ENCODE measurements at regions of chr6 and their contacts with region 1.

Region 1: DNA sequence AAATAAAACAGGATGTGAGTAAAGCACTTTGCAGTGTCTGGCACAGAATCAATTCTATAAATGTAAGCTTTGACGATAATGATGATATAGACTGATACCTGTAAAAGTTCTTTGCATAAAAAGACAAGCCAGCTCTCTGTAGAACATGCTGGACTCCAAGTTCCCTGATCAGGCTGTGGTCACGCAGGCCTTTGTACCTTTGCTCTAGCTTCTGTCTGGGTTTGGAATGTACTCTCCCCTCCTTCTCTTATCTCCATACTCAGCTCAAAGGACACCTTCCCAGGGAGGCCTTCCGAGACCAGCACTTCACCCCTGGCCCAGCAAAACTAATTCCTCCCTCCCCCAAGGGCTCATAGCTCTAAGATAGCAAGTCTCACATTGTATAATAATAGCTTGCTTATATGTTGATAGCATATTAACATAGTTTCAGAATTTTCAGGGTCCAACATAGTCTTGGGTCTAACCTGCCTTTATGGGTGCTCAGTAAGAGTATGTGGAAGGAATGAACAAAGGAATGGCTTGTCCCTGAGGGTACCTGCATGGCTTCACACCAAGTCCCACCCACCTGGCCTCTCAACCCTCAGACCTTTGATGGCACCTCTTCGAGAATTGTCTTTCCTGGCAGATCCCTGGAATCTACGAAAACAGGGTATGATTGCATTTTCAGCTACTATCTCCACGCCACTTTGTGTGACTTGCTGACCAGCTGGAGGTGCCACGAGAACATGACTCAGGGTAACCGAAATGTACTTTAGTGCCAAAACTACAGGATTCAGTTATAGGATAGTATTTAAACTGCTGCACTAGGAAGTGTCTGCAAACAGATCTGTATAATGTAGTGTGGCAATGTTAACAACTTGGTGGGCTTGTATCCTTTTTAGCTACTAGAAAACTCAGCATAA is 41.7 kb upstream of the PIM1 start:
- DNase-seq: peak in 2 of 7 donors; percentile 46 to 54
- H3K4me3 ChIP-seq: no peak overlapping the region
- H3K27ac ChIP-seq: peak overlapping the region in 1 of 5 donors; percentile 51
- H3K4me1 ChIP-seq: peaks cover 0 to 26% of the 10 kb centered on the region in 2 donors
- H3K27me3 ChIP-seq: no peaks in the 10 kb centered on the region
- CTCF ChIP-seq: no peak
- POLR2A ChIP-seq: no peak

Region 2: GRCh38 chr6:36666726-36667591 is 461.3 kb before region 1 on chr6:
- intact Hi-C with region 1: no loop called
- DNase-seq: peak; percentile 86 to 96 (median 96)
- H3K4me3 ChIP-seq: no peak overlapping the region
- H3K27ac ChIP-seq: peak overlapping the region in 4 of 5 donors; percentile 10 to 80 (median 56)
- H3K4me1 ChIP-seq: peaks cover 13 to 14% of the 10 kb centered on the region in 2 donors
- H3K27me3 ChIP-seq: no peaks in the 10 kb centered on the region
- CTCF ChIP-seq: no peak
- POLR2A ChIP-seq: peak in 1 of 2 donors; percentile 39

Region 3: GRCh38 chr6:37051138-37052026 is 76.8 kb before region 1 on chr6:
- intact Hi-C with region 1: loop called in 1 of 2 experiments (anchors 10 kb)
- DNase-seq: peak; percentile 85 to 97 (median 91)
- H3K4me3 ChIP-seq: no peak overlapping the region
- H3K27ac ChIP-seq: peak overlapping the region in 2 of 5 donors; percentile 8 to 76
- H3K4me1 ChIP-seq: peaks cover 0 to 18% of the 10 kb centered on the region in 2 donors
- H3K27me3 ChIP-seq: no peaks in the 10 kb centered on the region
- CTCF ChIP-seq: peak; percentile 78 to 98 (median 95)
- POLR2A ChIP-seq: no peak

Measured in adrenal gland (tissue), 19 donors.